ENCODE measurements at regions of chr4 and their contacts with region 1.

Region 1: GRCh38 chr4:16264798-16265197 is 38.5 kb upstream of the TAPT1 start:
- DNase-seq: no peak
- H3K4me3 ChIP-seq: no peak overlapping the region
- H3K27ac ChIP-seq: no peak overlapping the region
- H3K4me1 ChIP-seq: no peaks in the 10 kb centered on the region
- H3K27me3 ChIP-seq: no peaks in the 10 kb centered on the region
- CTCF ChIP-seq: peak; percentile 17 to 81 (median 55)
- POLR2A ChIP-seq: no peak

Region 2: DNA sequence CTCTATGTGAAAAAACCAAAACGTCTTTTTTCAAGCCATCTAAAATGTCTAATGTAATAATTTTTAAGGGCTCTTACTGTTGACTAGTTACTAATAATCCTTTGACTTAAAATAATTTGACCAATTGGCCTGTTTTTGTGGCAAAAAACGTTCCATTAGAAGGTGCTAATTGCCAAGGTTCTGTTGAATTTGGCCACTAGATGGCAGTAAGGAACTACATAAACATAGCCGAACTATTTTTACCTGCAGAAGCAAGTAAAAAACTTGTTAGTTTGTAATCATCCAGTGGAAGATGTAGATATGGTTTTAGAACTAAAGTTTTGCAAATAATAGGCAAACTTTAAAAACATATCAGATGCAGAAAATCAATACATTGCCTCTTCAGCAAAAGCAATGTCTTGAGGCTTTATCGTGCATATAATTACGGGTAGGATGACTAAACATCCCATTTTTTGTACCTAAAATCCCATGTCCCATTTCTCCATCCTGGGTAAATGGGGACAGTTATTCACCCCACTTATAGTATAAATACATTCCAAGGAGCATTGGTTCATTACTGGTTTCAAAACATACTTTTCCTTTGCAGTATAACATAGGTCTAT is 238.5 kb before region 1 on chr4:
- intact Hi-C with region 1: loop called (anchors 2 kb)
- DNase-seq: no peak
- H3K4me3 ChIP-seq: no peak overlapping the region
- H3K27ac ChIP-seq: no peak overlapping the region
- H3K4me1 ChIP-seq: no peaks in the 10 kb centered on the region
- H3K27me3 ChIP-seq: no peaks in the 10 kb centered on the region
- CTCF ChIP-seq: peak in 5 of 6 experiments; percentile 75 to 91 (median 80)
- POLR2A ChIP-seq: no peak

Region 3: GRCh38 chr4:16196478-16197393 is 68.1 kb before region 1 on chr4:
- intact Hi-C with region 1: loop called (anchors 10 kb)
- DNase-seq: no peak
- H3K4me3 ChIP-seq: no peak overlapping the region
- H3K27ac ChIP-seq: peak overlapping the region in 2 of 3 donors; percentile 34 to 62
- H3K4me1 ChIP-seq: peaks cover 4 to 8% of the 10 kb centered on the region in 2 donors
- H3K27me3 ChIP-seq: no peaks in the 10 kb centered on the region
- CTCF ChIP-seq: peak in 4 of 6 experiments; percentile 53 to 78 (median 62)
- POLR2A ChIP-seq: no peak

Region 4: DNA sequence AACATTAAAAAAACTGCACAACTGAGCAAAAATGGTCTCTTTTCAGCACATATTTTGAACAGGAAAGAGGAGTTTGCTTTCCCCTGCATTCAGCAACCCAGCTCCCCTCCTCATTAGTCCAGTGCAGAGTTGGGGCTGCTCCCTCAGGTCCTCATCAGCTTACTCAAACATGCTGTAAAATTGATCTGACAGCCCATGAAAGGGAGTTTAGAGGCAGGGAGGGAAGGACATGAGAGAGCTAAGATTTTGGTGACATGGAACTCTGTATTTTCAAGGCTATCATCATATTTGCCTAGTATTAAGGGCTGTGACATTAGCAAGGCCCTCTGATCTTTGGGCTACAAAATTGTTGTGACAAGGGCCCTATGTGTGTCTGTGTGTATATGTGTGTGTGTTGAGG is 167.1 kb after region 1 on chr4:
- intact Hi-C with region 1: no loop called
- DNase-seq: no peak
- H3K4me3 ChIP-seq: no peak overlapping the region
- H3K27ac ChIP-seq: no peak overlapping the region
- H3K4me1 ChIP-seq: no peaks in the 10 kb centered on the region
- H3K27me3 ChIP-seq: no peaks in the 10 kb centered on the region
- CTCF ChIP-seq: no peak
- POLR2A ChIP-seq: no peak